Activated naive CD4-positive, alpha-beta T cell treated with anti-CD3 and anti-CD28 coated beads for 36 hours (primary cell): ENCODE measurements at regions of chr9 and their contacts with region 1.

Region 1: GRCh38 chr9:128026773-128027541 is 40.2 kb downstream of the NAIF1 start:
- DNase-seq: peak; percentile 80
- H3K4me3 Mint-ChIP-seq: peak overlapping the region; percentile 80
- H3K27ac Mint-ChIP-seq: peak overlapping the region; percentile 98
- H3K4me1 Mint-ChIP-seq: peaks cover 90% of the 10 kb centered on the region
- H3K27me3 Mint-ChIP-seq: no peaks in the 10 kb centered on the region

Region 2: GRCh38 chr9:127293328-127293727 is 733.6 kb before region 1 on chr9:
- CTCF ChIA-PET with region 1: no interaction called
- intact Hi-C with region 1: no loop called
- DNase-seq: no peak
- H3K4me3 Mint-ChIP-seq: no peak overlapping the region
- H3K27ac Mint-ChIP-seq: no peak overlapping the region
- H3K4me1 Mint-ChIP-seq: no peaks in the 10 kb centered on the region
- H3K27me3 Mint-ChIP-seq: peaks cover 13% of the 10 kb centered on the region

Region 3: DNA sequence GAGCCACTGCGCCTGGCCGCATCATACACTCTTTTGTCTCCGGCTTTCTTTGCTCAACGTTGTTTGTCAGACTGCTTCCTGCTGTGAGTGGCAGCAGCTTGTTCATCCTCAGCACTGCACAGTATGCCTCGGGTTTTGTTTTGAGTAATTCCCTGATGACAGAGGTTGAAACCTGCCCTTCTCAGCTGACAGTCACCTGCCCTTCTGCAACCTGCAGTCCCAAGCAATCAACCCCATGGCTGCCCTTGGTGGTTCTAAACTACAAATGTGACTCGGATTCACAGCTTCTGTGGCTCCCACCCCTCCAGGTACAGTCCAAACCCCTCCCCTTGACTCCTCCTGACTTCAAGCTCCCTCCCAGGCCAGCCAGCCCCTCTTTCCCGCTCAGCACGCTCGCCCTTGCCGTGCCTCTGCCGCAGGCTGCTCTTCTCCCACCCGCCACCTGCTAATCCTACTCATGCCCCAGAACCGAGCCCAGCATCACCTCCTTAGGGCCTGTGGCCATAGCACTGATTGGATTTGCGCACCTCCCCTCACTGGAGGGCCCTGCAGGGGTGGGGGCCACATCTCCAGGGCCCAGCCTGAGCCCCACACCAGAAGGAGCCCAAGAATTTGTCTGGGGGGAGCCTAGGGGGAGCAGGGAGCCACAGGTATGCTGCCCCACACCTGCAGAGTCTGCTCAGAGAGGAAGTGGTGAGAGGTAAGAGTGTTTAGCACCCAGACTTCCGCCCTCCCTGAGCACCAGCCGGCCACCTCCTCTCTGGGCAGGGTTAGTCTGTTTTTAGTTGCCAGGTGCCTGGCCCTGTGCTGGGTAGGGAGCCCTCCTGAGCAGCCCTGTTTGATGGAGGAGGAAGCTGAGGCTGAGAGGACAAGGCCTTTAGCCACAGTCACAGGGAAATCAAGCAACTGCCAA is 56.3 kb before region 1 on chr9:
- CTCF ChIA-PET with region 1: interaction called, 142 read pairs
- intact Hi-C with region 1: loop called (anchors 1 kb)
- DNase-seq: peak; percentile 93
- H3K4me3 Mint-ChIP-seq: peak overlapping the region; percentile 72
- H3K27ac Mint-ChIP-seq: peak overlapping the region; percentile 99
- H3K4me1 Mint-ChIP-seq: peaks cover 96% of the 10 kb centered on the region
- H3K27me3 Mint-ChIP-seq: no peaks in the 10 kb centered on the region